Psoas muscle (tissue), 8 donors: ENCODE measurements at regions of chr1 and their contacts with region 1.

Region 1: DNA sequence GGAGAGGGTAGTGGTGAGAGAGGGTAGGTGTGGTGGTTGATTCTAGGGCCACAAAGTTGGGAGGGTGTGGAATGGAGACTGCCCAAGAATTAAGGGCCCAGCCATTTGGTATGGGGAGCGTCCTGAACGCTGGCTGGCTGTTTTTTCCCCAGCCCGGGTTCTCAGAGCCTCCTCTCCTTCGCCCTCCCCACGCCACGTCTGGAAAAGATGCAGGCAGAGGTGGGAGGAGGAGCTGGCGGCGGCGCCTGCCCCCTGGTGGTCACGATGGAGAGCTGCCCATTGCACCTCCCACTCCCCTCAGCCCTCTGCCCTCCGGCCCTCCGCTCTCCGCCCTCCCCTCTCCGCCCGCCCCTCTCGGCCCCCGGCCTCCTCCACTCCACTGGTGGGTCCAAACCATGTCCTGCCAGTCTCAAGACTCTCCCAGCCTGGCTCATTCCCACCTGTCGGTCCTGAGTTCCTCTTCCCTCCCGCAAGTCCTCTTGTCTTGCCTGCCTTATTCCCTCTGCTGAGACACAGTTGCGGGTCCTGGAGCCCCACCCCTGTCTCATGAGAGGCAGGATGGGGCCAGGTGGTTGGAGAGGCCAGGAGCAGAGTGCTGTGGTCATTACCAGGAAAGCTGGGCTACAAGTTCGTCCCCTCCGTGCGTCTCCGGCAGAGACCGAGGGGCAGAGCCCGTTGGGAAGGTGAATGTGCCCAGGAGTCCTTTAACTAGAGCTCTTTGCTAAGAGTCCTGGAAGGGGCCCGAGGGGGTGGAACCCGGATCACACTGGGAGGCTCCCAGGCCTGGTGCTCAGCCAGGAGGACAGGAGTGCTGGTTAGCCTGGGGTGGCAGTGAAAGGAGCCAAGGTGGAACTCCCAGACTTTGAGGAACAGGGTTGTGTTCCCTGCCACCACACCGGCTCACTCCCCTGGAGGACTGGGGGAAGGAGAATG is 22.6 kb downstream of the ETNK2 start:
- DNase-seq: peak; percentile 68 to 88
- ATAC-seq: peak; percentile 86 to 94 (median 90)
- H3K4me3 ChIP-seq: peak overlapping the region; percentile 52
- H3K27ac ChIP-seq: no peak overlapping the region
- H3K4me1 ChIP-seq: peaks cover 21% of the 10 kb centered on the region
- H3K27me3 ChIP-seq: no peaks in the 10 kb centered on the region
- CTCF ChIP-seq: peak; percentile 95

Region 2: GRCh38 chr1:203861379-203862184 is 267.6 kb before region 1 on chr1 and contains the start of gene SNRPE:
- intact Hi-C with region 1: loop called (anchors 1 to 2 kb)
- DNase-seq: peak; percentile 95 to 98
- ATAC-seq: peak; percentile 97 to 98 (median 98)
- H3K4me3 ChIP-seq: peak within 1 kb of the TSS; percentile 100
- H3K27ac ChIP-seq: peak within 1 kb of the TSS; percentile 91
- H3K4me1 ChIP-seq: peaks cover 17% of the 10 kb centered on the region
- H3K27me3 ChIP-seq: no peaks in the 10 kb centered on the region
- CTCF ChIP-seq: peak; percentile 95
- total RNA-seq, gene SNRPE: 30.4 to 68.1 (median 56.6) TPM

Region 3: GRCh38 chr1:203871107-203871875 is 257.9 kb before region 1 on chr1:
- intact Hi-C with region 1: loop called in 1 of 2 experiments (anchors 2 kb)
- DNase-seq: no peak
- ATAC-seq: peak; percentile 41 to 80 (median 53)
- H3K4me3 ChIP-seq: no peak overlapping the region
- H3K27ac ChIP-seq: no peak overlapping the region
- H3K4me1 ChIP-seq: no peaks in the 10 kb centered on the region
- H3K27me3 ChIP-seq: no peaks in the 10 kb centered on the region
- CTCF ChIP-seq: peak; percentile 72

Region 4: DNA sequence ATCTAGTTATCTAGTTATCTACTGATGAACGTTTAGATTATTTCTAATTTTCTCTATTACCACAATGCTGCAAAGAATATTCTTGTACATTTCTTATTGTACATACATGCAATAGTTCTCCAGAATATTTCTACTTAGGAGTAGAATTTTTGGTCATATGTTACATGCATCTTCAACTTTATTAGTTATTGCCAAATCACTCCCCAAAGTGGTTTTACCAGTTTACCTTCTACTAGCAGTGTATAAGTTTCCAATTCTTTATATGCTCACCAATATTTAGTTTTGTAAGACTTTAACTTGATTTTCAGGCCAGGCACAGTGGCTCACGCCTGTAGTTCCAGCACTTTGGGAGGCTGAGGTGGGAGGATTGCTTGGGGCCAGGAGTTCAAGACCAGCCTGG is 212.5 kb before region 1 on chr1:
- intact Hi-C with region 1: no loop called
- DNase-seq: no peak
- ATAC-seq: no peak
- H3K4me3 ChIP-seq: no peak overlapping the region
- H3K27ac ChIP-seq: no peak overlapping the region
- H3K4me1 ChIP-seq: no peaks in the 10 kb centered on the region
- H3K27me3 ChIP-seq: no peaks in the 10 kb centered on the region
- CTCF ChIP-seq: no peak

Region 5: GRCh38 chr1:204031098-204031710 is 98.0 kb before region 1 on chr1:
- intact Hi-C with region 1: no loop called
- DNase-seq: no peak
- ATAC-seq: no peak
- H3K4me3 ChIP-seq: no peak overlapping the region
- H3K27ac ChIP-seq: no peak overlapping the region
- H3K4me1 ChIP-seq: no peaks in the 10 kb centered on the region
- H3K27me3 ChIP-seq: no peaks in the 10 kb centered on the region
- CTCF ChIP-seq: no peak

Region 6: GRCh38 chr1:204072931-204073836 is 56.0 kb before region 1 on chr1 and contains the start of gene SOX13:
- intact Hi-C with region 1: loop called in 1 of 2 experiments (anchors 1 kb)
- DNase-seq: peak; percentile 85 to 93
- ATAC-seq: peak; percentile 71 to 85 (median 83)
- H3K4me3 ChIP-seq: peak within 1 kb of the TSS; percentile 76
- H3K27ac ChIP-seq: peak within 1 kb of the TSS; percentile 78
- H3K4me1 ChIP-seq: peaks cover 28% of the 10 kb centered on the region
- H3K27me3 ChIP-seq: no peaks in the 10 kb centered on the region
- CTCF ChIP-seq: no peak
- total RNA-seq, gene SOX13: 8.5 to 19.6 (median 9.4) TPM

Region 7: GRCh38 chr1:204089044-204089751 is 40.0 kb before region 1 on chr1:
- intact Hi-C with region 1: loop called in 1 of 2 experiments (anchors 5 kb)
- DNase-seq: peak; percentile 68 to 90
- ATAC-seq: peak; percentile 48 to 86 (median 72)
- H3K4me3 ChIP-seq: peak overlapping the region; percentile 51
- H3K27ac ChIP-seq: peak overlapping the region; percentile 81
- H3K4me1 ChIP-seq: peaks cover 94% of the 10 kb centered on the region
- H3K27me3 ChIP-seq: no peaks in the 10 kb centered on the region
- CTCF ChIP-seq: no peak